ENCODE measurements at regions of chr6 and their contacts with region 1.

Region 1: DNA sequence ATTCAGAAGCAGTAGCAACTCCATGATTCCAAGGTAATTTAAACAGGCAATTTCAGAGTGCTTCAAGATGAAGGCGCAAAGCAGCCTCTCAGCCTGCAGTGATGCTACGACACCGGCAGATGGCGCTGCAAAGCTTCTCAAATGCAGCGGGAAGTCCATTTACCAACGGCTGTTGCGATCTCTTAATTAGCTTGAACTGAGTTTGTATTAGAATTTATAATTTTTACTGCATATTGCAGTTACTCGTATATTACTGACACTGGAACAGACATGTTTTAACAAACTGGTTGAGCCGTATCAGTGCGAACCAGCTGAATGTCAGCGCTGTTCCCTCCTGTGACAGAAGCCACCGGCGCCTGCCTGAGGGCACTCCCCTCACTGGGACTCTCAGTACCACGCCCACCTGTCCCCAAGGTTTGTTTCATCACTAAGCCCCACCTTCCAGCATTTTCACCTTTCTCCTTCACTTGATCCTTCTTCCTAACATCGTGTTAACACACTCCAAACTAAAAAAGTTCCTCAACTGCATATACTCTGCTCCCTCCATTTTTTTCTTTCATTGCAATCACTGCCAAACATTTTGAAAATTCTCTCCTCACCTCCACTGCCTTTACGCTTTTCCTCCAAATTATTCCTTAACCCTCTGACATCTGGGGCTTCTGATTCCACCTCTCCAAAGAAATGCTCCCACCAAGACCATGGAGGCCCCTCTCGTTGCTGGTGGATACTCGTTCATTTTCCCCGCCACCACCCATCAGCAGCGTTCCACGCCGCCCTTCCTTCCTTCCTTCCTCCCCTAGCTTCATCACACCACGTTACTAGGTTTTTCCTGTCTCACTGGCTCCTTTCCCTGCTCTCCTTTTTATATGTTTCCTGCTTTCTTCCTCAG is 14.5 kb downstream of the GNL1 start:
- DNase-seq: peak; percentile 88
- ATAC-seq: peak; percentile 82
- H3K4me3 Mint-ChIP-seq: peak overlapping the region; percentile 65
- H3K27ac Mint-ChIP-seq: peak overlapping the region; percentile 73
- H3K4me1 Mint-ChIP-seq: peaks cover 34% of the 10 kb centered on the region
- H3K27me3 Mint-ChIP-seq: peaks cover 5% of the 10 kb centered on the region

Region 2: GRCh38 chr6:30396833-30397479 is 144.8 kb before region 1 on chr6:
- CTCF ChIA-PET with region 1: no interaction called
- POLR2A ChIA-PET with region 1: no interaction called
- DNase-seq: peak; percentile 88
- ATAC-seq: peak; percentile 99
- H3K4me3 Mint-ChIP-seq: no peak overlapping the region
- H3K27ac Mint-ChIP-seq: no peak overlapping the region
- H3K4me1 Mint-ChIP-seq: no peaks in the 10 kb centered on the region
- H3K27me3 Mint-ChIP-seq: peaks cover 39% of the 10 kb centered on the region

Region 3: GRCh38 chr6:30463651-30464618 is 77.8 kb before region 1 on chr6:
- CTCF ChIA-PET with region 1: interaction called, 20 read pairs
- POLR2A ChIA-PET with region 1: interaction called, 3 read pairs
- DNase-seq: peak; percentile 78
- ATAC-seq: peak; percentile 64
- H3K4me3 Mint-ChIP-seq: no peak overlapping the region
- H3K27ac Mint-ChIP-seq: no peak overlapping the region
- H3K4me1 Mint-ChIP-seq: peaks cover 29% of the 10 kb centered on the region
- H3K27me3 Mint-ChIP-seq: peaks cover 80% of the 10 kb centered on the region

Region 4: GRCh38 chr6:30500421-30501355 is 41.1 kb before region 1 on chr6:
- CTCF ChIA-PET with region 1: interaction called, 124 read pairs
- POLR2A ChIA-PET with region 1: no interaction called
- DNase-seq: no peak
- ATAC-seq: peak; percentile 65
- H3K4me3 Mint-ChIP-seq: peak overlapping the region; percentile 65
- H3K27ac Mint-ChIP-seq: peak overlapping the region; percentile 76
- H3K4me1 Mint-ChIP-seq: peaks cover 29% of the 10 kb centered on the region
- H3K27me3 Mint-ChIP-seq: no peaks in the 10 kb centered on the region

Region 5: GRCh38 chr6:30556066-30556905 is 14.5 kb after region 1 on chr6 and contains the start of gene GNL1:
- CTCF ChIA-PET with region 1: interaction called, 125 read pairs
- POLR2A ChIA-PET with region 1: interaction called, 18 read pairs
- DNase-seq: peak; percentile 99
- ATAC-seq: peak; percentile 90
- H3K4me3 Mint-ChIP-seq: peak within 1 kb of the TSS; percentile 96
- H3K27ac Mint-ChIP-seq: peak within 1 kb of the TSS; percentile 96
- H3K4me1 Mint-ChIP-seq: peaks cover 30% of the 10 kb centered on the region
- H3K27me3 Mint-ChIP-seq: no peaks in the 10 kb centered on the region
- total RNA-seq, gene GNL1: 63.7 to 69.9 TPM

Region 6: GRCh38 chr6:30578051-30578450 is 36.3 kb after region 1 on chr6:
- CTCF ChIA-PET with region 1: interaction called, 11 read pairs
- POLR2A ChIA-PET with region 1: no interaction called
- DNase-seq: no peak
- ATAC-seq: no peak
- H3K4me3 Mint-ChIP-seq: no peak overlapping the region
- H3K27ac Mint-ChIP-seq: no peak overlapping the region
- H3K4me1 Mint-ChIP-seq: peaks cover 21% of the 10 kb centered on the region
- H3K27me3 Mint-ChIP-seq: no peaks in the 10 kb centered on the region

Region 7: GRCh38 chr6:30672445-30673253 is 130.9 kb after region 1 on chr6 and contains the start of gene DHX16:
- CTCF ChIA-PET with region 1: interaction called, 11 read pairs
- POLR2A ChIA-PET with region 1: no interaction called
- DNase-seq: peak; percentile 95
- ATAC-seq: peak; percentile 86
- H3K4me3 Mint-ChIP-seq: peak within 1 kb of the TSS; percentile 93
- H3K27ac Mint-ChIP-seq: peak within 1 kb of the TSS; percentile 78
- H3K4me1 Mint-ChIP-seq: peaks cover 39% of the 10 kb centered on the region
- H3K27me3 Mint-ChIP-seq: no peaks in the 10 kb centered on the region
- total RNA-seq, gene DHX16: 38.5 to 41.0 TPM

Measured in activated CD8-positive, alpha-beta T cell treated with anti-CD3 and anti-CD28 coated beads, Interleukin-2, amount 10 ng/mL, durations not matched to agents 7 days and 5 days (primary cell).